Astrocyte of the cerebellum (primary cell): ENCODE measurements at regions of chr4 and their contacts with region 1.

Region 1: DNA sequence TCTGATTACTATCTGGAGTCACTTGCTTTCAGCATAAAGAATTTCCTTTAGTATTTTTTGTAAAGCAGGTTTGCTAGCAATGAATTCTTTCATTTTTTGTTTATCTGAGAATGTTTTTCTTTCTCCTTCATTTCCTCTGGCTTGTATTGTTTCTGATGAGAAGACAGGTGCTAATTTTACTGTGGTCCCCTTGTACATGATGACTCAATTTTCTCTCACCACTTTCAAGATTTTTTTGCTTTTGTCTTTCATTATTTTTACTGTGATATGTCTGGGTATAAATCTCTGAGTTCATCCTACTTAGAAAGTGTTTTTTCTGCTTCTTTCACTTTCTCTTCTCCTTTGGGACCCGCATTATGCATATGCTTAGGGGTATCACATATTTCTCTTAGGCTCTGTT is 62.6 kb downstream of the PKD2 start:
- DNase-seq: no peak
- H3K4me3 ChIP-seq: no peak overlapping the region
- CTCF ChIP-seq: no peak

Region 2: GRCh38 chr4:88341227-88342192 is 271.5 kb after region 1 on chr4:
- in situ Hi-C with region 1: loop called (anchors 5 kb)
- DNase-seq: peak; percentile 44
- H3K4me3 ChIP-seq: no peak overlapping the region
- CTCF ChIP-seq: no peak